ENCODE measurements at regions of chr19 and their contacts with region 1.

Region 1: DNA sequence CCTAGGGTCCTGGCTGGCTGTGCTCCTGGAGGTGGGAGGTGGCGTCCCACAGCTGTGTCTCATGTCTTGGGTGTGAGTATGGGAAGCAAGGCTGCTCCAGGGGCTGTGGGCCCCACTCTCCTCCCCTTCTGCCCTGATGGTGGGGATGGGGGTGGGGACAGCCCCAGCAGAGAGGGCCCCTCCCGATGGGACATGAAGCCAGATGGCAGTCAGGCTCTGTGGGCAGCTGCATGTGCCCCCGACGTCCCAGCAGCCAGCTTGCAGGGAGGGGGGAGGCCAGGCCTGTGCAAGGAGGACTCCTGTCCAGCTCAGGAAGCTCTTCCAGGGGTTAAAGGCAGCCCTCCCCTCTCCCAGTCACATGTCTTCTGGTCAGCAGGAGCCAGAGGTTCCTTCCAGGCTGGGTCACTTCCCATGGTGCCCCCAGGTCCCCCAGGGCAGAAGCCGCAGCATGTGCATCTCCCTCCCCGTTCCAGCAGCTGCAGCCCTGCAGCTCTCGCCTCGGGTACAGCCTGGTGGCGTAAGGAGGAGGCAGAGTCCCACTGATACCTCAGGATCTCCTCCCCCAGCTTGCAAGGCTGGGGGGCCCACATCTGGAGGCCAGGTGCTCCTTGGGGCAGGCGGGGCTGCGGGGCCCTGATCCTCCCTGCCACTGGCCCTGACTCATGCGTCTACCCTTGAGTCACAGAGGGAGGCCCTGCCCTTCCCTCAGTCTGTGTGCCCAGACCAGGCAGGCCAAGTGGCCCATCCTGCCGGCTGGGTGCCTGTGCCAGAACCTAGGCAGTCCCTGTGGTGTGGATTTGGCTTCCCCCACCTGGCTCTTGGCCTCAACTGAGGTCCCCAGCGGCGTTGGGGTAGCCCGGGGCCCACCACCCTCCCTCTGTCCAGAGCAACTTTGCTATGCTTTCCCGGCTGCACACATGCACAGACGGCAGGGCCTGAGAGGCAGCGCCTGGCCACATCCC is 13.0 kb downstream of the YIPF2 start:
- DNase-seq: no peak
- ATAC-seq: peak in 1 of 2 donors; percentile 6
- H3K4me3 ChIP-seq: no peak overlapping the region
- H3K27ac ChIP-seq: no peak overlapping the region
- H3K4me1 ChIP-seq: no peaks in the 10 kb centered on the region
- H3K27me3 ChIP-seq: no peaks in the 10 kb centered on the region

Region 2: GRCh38 chr19:10876459-10877240 is 38.8 kb before region 1 on chr19:
- intact Hi-C with region 1: loop called in 3 of 4 experiments (anchors 5 to 10 kb)
- DNase-seq: peak in 2 of 3 donors; percentile 52 to 73
- ATAC-seq: peak; percentile 50 to 51
- H3K4me3 ChIP-seq: no peak overlapping the region
- H3K27ac ChIP-seq: peak overlapping the region; percentile 87
- H3K4me1 ChIP-seq: peaks cover 7% of the 10 kb centered on the region
- H3K27me3 ChIP-seq: no peaks in the 10 kb centered on the region

Region 3: GRCh38 chr19:11018179-11018578 is 102.8 kb after region 1 on chr19:
- intact Hi-C with region 1: no loop called
- DNase-seq: peak in 1 of 3 donors; percentile 17
- ATAC-seq: no peak
- H3K4me3 ChIP-seq: no peak overlapping the region
- H3K27ac ChIP-seq: no peak overlapping the region
- H3K4me1 ChIP-seq: no peaks in the 10 kb centered on the region
- H3K27me3 ChIP-seq: no peaks in the 10 kb centered on the region

Measured in right cardiac atrium (tissue), 5 donors.